GM12878 (cell line): ENCODE measurements at regions of chr13 and their contacts with region 1.

Region 1: DNA sequence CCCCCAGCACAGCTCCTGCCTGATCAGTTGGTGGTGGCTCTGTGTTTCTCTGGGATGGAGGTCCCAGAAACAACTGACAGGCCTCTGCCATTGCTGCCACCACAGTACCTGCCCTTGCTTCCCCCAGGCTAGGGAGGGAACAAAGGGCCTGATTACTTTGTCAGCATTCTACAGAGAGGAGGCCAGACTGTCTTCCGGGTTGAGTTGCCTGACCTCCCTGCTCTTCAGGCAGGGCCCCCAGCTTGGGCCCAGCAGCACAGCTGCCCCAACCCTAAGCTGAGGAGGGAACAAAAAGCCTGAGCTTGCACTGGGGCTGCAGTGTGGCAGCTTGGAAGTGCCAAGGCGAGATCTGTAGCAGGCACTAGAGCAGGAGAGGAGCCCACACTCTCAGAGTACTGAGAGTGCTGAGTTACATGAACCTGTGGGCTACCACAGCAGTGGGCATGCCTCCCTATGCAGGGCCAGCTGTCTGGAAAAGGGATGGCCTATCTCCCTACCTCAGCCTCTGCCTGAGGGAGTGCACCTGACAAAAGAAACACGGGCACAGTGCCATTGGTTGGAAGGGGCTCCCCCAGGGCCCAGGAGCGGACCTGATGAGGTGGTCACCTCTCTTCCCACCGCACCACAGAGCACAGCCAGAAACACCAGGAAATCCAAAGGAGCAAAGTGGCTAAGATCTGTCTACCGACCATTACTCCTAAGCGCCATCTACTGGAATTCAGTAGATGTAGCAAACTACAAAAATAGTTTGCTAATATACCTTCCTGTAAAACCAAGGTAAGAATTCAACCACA is 24.4 kb downstream of the SLC25A15 start:
- DNase-seq: no peak
- ATAC-seq: peak; percentile 77
- H3K4me3 ChIP-seq: no peak overlapping the region
- H3K27ac ChIP-seq: no peak overlapping the region
- H3K4me1 ChIP-seq: peaks cover 6% of the 10 kb centered on the region; the same call in 1 of the 2 replicates
- H3K27me3 ChIP-seq: no peaks in the 10 kb centered on the region
- CTCF ChIP-seq: peak; percentile 42 to 73 (median 56)
- EP300 ChIP-seq: no peak
- POLR2A ChIP-seq: no peak
- RAD21 ChIP-seq: peak; percentile 60

Region 2: DNA sequence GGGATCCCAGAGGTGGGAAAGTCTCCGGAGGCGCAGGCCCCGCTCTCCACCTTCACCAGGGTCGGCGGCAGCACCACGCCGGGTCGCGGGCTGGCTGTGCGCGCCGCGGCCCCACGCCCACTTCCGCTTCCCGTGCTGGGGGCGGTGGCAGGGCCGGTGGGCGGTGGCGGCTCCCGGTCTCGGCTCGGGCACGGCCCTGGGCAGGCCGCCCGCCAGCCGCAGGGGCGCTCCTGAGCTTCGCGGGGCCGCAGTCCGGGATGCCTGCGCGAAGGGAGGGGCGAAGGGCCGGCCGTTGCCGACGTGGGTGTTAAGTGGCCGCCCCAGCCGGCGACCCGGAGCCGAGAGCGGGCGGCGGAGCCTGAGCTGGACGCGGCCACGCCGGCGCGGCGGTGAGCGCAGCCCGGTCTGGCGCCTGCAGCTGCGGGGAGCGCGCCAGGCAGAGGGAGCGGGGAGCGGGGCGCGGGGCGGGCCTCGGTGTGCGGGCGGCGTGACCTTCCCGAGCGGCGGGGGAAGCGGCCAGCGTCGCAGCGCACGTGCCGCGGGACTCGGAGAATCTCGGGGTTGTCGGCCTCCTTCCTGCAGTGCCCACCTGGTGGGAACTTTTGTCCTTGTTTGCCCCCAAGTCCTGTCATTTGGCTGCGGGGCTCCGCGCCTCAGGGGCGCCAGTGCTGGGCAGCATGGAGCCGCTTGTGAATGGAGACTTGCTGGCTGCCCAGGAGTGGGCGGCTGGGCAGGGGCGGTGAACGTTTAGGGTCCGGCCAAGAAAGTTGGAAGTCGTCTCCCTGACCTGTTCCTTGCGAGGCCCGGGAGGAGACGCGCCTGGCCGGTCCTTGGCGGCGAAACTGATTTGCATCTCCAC is 24.4 kb before region 1 on chr13 and contains the start of gene SLC25A15:
- CTCF ChIA-PET with region 1: interaction called, 4 read pairs
- POLR2A ChIA-PET with region 1: no interaction called
- RAD21 ChIA-PET with region 1: interaction called, 5 read pairs
- SMC1A ChIA-PET with region 1: interaction called, 3 read pairs
- in situ Hi-C with region 1: no loop called
- intact Hi-C with region 1: loop called (anchors 2 kb)
- DNase-seq: no peak
- ATAC-seq: peak; percentile 94
- H3K4me3 ChIP-seq: peak within 1 kb of the TSS; percentile 83
- H3K27ac ChIP-seq: peak within 1 kb of the TSS; percentile 56
- H3K4me1 ChIP-seq: peaks cover 17% of the 10 kb centered on the region
- H3K27me3 ChIP-seq: no peaks in the 10 kb centered on the region
- CTCF ChIP-seq: peak in 2 of 3 experiments; percentile 33 to 47; a peak in 3 of 6 replicates
- EP300 ChIP-seq: 0 out of 4 replicates have a peak, but pooled peaks of 1 of the 2 experiments have one; percentile 23
- POLR2A ChIP-seq: peak; percentile 76
- RAD21 ChIP-seq: peak; percentile 42
- polyA plus RNA-seq, gene SLC25A15: 2.7 to 3.6 TPM

Region 3: DNA sequence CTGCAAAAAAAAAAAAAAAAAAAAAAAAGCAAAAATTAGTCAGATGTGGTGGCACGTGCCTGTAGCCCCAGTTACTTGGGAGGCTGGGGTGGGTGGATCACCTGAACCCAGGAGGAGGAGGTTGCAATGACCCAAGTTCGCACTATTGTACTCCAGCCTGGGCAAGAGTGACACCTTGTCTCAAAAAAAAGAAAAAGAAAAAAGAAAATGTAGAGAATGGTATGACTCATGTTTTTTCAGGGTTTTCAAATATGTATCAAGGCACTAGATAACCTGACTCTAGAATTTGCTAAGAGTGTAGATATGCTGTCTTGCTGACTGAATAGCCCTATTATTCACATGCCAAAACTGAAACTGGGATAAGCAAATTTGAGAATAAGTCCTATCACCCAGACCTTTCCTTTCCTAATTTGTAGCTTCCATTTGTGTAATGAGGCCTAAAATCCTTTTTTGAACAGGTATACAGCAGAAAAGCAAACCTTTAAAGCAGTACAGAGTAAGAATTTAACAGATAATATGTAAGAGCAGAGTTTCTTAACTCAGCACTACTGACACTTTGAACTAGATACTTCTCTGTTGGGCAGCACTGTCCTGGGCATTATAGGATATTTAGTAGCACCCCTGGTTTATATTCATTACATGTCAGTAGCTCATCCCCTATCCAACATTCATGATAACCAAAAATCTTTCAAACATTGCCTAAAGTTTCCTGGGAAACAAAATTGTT is 96.6 kb after region 1 on chr13:
- CTCF ChIA-PET with region 1: no interaction called
- POLR2A ChIA-PET with region 1: no interaction called
- RAD21 ChIA-PET with region 1: no interaction called
- SMC1A ChIA-PET with region 1: no interaction called
- in situ Hi-C with region 1: no loop called
- intact Hi-C with region 1: loop called (anchors 5 kb)
- DNase-seq: peak; percentile 21
- ATAC-seq: peak; percentile 94
- H3K4me3 ChIP-seq: no peak overlapping the region
- H3K27ac ChIP-seq: no peak overlapping the region; the same call in 1 of the 2 replicates
- H3K4me1 ChIP-seq: peaks cover 5% of the 10 kb centered on the region; the same call in 1 of the 2 replicates
- H3K27me3 ChIP-seq: no peaks in the 10 kb centered on the region
- CTCF ChIP-seq: no peak
- EP300 ChIP-seq: peak in 1 of 2 experiments; percentile 54; a peak in 1 of 4 replicates
- POLR2A ChIP-seq: no peak
- RAD21 ChIP-seq: no peak

Region 4: GRCh38 chr13:41231786-41232185 is 417.9 kb after region 1 on chr13:
- CTCF ChIA-PET with region 1: no interaction called
- POLR2A ChIA-PET with region 1: no interaction called
- RAD21 ChIA-PET with region 1: no interaction called
- SMC1A ChIA-PET with region 1: no interaction called
- in situ Hi-C with region 1: no loop called
- intact Hi-C with region 1: no loop called
- DNase-seq: peak; percentile 24
- ATAC-seq: peak; percentile 72
- H3K4me3 ChIP-seq: no peak overlapping the region
- H3K27ac ChIP-seq: no peak overlapping the region
- H3K4me1 ChIP-seq: peaks cover 14% of the 10 kb centered on the region
- H3K27me3 ChIP-seq: no peaks in the 10 kb centered on the region
- CTCF ChIP-seq: no peak
- EP300 ChIP-seq: no peak
- POLR2A ChIP-seq: no peak
- RAD21 ChIP-seq: no peak